PC-9 (cell line): ENCODE measurements at regions of chr12 and their contacts with region 1.

Region 1: DNA sequence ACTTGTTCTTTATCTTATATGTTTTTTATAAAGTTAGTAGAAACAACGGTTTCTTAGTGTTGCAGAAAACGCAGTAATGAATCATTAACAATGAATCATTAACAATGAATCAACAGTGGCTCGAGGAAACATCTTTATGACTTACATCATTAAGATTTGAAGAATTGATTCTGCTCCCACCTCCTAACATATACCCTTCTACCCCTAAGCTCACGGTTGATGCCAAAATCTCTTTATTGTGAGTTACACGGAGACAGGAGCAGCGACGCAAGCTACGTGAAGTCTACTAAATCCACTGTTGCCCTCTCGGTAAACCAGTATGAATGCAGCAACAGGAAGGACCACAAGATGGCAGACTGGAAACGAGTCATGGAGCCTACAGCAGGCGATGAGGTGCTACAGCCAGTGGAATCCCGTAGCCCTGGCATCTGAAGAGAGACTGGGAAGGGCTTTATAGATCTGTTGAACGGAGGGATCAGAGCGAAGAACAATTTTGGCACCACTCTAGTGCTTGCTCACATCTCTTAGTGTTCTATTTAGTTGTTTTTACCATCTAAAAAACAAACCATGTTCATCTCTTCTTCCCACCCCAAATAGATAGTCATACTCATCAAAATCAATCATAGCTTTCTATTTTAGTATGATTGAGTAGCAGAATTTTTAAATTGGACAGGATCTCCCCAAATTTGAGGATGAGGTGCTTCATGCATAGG is 332.7 kb downstream of the DUSP6 start:
- DNase-seq: peak; percentile 68 to 71
- H3K4me3 ChIP-seq: peak overlapping the region; percentile 51
- H3K27ac ChIP-seq: no peak overlapping the region
- H3K4me1 ChIP-seq: peaks cover 10% of the 10 kb centered on the region; the same call in 1 of the 2 replicates
- H3K27me3 ChIP-seq: no peaks in the 10 kb centered on the region
- CTCF ChIP-seq: peak; percentile 92

Region 2: DNA sequence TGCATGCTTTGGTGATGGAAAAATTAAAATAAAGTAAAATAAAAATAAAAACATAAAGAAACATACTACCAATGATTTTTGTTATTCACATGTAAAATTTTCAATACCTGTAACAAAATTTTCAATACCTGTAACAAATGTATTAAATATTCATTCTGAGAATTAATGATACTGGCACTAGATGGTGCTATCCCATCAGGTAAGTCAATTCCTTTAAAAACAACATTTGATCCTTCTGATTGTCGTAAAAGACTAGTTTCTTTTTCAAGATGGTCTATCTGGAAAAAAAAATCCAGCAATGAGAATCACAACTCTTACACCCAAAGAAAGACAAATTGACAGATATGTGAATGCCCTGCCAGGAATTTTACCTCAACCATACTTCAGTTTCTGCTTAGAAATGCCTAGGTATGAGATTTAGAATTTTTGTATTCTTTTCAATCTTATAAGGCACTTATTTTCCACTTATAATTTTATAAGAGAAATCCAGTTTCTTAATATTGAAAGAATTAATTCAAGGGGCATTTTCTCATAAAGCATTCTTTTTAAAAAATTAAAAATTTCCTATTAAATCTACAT is 908.4 kb before region 1 on chr12:
- CTCF ChIA-PET with region 1: no interaction called
- POLR2A ChIA-PET with region 1: no interaction called
- intact Hi-C with region 1: loop called (anchors 2 kb)
- DNase-seq: no peak
- H3K4me3 ChIP-seq: no peak overlapping the region
- H3K27ac ChIP-seq: no peak overlapping the region
- H3K4me1 ChIP-seq: no peaks in the 10 kb centered on the region
- H3K27me3 ChIP-seq: no peaks in the 10 kb centered on the region
- CTCF ChIP-seq: peak; percentile 72

Region 3: GRCh38 chr12:88153959-88154358 is 865.6 kb before region 1 on chr12:
- CTCF ChIA-PET with region 1: no interaction called
- POLR2A ChIA-PET with region 1: no interaction called
- intact Hi-C with region 1: loop called (anchors 1 kb)
- DNase-seq: no peak
- H3K4me3 ChIP-seq: no peak overlapping the region
- H3K27ac ChIP-seq: no peak overlapping the region
- H3K4me1 ChIP-seq: no peaks in the 10 kb centered on the region
- H3K27me3 ChIP-seq: no peaks in the 10 kb centered on the region
- CTCF ChIP-seq: peak; percentile 69

Region 4: GRCh38 chr12:89451841-89452251 is 432.3 kb after region 1 on chr12:
- CTCF ChIA-PET with region 1: interaction called, 11 read pairs
- POLR2A ChIA-PET with region 1: no interaction called
- intact Hi-C with region 1: no loop called
- DNase-seq: no peak
- H3K4me3 ChIP-seq: no peak overlapping the region
- H3K27ac ChIP-seq: no peak overlapping the region
- H3K4me1 ChIP-seq: 0 out of 2 replicates have a peak, but pooled peaks cover 9% of the 10 kb centered on the region
- H3K27me3 ChIP-seq: no peaks in the 10 kb centered on the region
- CTCF ChIP-seq: no peak

Region 5: GRCh38 chr12:89524541-89525285 is 505.1 kb after region 1 on chr12 and contains the start of gene GALNT4:
- CTCF ChIA-PET with region 1: no interaction called
- POLR2A ChIA-PET with region 1: no interaction called
- intact Hi-C with region 1: loop called (anchors 1 kb)
- DNase-seq: peak; percentile 70 to 82
- H3K4me3 ChIP-seq: peak within 1 kb of the TSS; percentile 98
- H3K27ac ChIP-seq: peak within 1 kb of the TSS; percentile 14; the same call in 1 of the 2 replicates
- H3K4me1 ChIP-seq: peaks cover 22% of the 10 kb centered on the region
- H3K27me3 ChIP-seq: no peaks in the 10 kb centered on the region
- CTCF ChIP-seq: peak; percentile 75
- total RNA-seq, gene GALNT4: 3.2 and 3.7 TPM in 2 replicates

Region 6: GRCh38 chr12:90940872-90941499 is 1921.4 kb after region 1 on chr12:
- CTCF ChIA-PET with region 1: no interaction called
- POLR2A ChIA-PET with region 1: no interaction called
- intact Hi-C with region 1: loop called (anchors 5 kb)
- DNase-seq: peak in 1 of 2 experiments; percentile 48
- H3K4me3 ChIP-seq: no peak overlapping the region
- H3K27ac ChIP-seq: no peak overlapping the region
- H3K4me1 ChIP-seq: peaks cover 16% of the 10 kb centered on the region
- H3K27me3 ChIP-seq: no peaks in the 10 kb centered on the region
- CTCF ChIP-seq: peak; percentile 83